SK-N-SH (cell line): ENCODE measurements at regions of chr10 and their contacts with region 1.

Region 1: DNA sequence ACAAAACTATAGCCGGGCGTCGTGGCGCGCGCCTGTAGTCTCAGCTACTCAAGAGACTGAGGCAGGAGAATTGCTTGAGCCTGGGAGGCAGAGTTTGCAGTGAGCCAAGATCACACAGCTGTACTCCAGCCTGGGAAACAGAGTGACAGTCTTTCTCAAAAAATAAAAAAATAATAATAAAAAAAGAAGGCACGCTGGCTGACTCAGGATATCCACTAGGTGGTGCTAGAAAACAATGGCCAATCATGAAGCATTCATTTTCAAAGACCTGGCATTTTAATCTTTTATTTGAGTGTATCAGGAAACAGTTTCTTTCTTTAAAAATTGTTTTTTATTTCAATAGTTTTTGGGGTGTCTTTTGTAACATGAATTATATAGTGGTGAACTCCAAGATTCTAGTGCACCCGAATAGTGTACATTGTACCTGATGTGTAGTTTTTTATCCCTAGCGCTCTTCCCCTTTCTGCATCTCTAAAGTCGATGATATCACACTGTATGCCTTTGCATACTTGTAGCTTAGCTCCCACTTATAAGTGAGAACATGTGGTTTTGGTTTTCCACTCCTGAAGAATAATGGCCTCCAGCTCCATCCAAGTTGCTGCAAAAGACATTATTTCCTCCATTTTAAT is 88.6 kb downstream of the LYZL1 start:
- DNase-seq: peak; percentile 55
- H3K4me3 ChIP-seq: no peak overlapping the region
- H3K27ac ChIP-seq: no peak overlapping the region
- H3K4me1 ChIP-seq: peaks cover 0 to 5% of the 10 kb centered on the region in 2 experiments; a peak in 2 of 4 replicates
- H3K27me3 ChIP-seq: no peaks in the 10 kb centered on the region
- CTCF ChIP-seq: peak; percentile 90
- EP300 ChIP-seq: no peak
- RAD21 ChIP-seq: peak; percentile 74

Region 2: GRCh38 chr10:29392376-29393021 is 15.1 kb after region 1 on chr10:
- CTCF ChIA-PET with region 1: interaction called, 28 read pairs
- POLR2A ChIA-PET with region 1: no interaction called
- DNase-seq: peak; percentile 75
- H3K4me3 ChIP-seq: no peak overlapping the region; a peak in 1 of 4 replicates
- H3K27ac ChIP-seq: no peak overlapping the region
- H3K4me1 ChIP-seq: no peaks in the 10 kb centered on the region; a peak in 1 of 4 replicates
- H3K27me3 ChIP-seq: peaks cover 23% of the 10 kb centered on the region; the same call in 1 of the 2 replicates
- CTCF ChIP-seq: peak; percentile 84
- EP300 ChIP-seq: no peak
- RAD21 ChIP-seq: peak; percentile 74

Region 3: DNA sequence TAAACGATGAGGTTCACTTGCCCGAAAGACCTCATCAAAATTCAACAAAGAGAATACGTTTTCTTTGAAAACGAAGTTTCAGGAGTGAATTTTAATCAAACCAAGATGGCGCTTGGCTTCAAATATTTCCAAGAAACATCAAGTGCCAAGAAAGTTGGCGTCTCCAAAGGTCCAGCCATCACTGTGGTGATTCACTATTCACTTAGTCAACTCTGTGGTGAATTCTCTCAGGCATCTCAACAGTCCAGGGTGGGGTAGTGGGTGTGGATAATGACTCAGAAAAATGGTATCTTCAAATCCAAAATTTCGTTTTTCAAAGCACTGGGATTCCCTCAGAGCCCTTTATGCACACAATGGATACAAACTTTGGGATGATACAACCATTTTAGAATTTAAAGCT is 124.2 kb after region 1 on chr10:
- CTCF ChIA-PET with region 1: interaction called, 10 read pairs
- POLR2A ChIA-PET with region 1: no interaction called
- DNase-seq: no peak
- H3K4me3 ChIP-seq: no peak overlapping the region
- H3K27ac ChIP-seq: peak overlapping the region in 1 of 2 experiments; percentile 45; a peak in 2 of 4 replicates
- H3K4me1 ChIP-seq: no peaks in the 10 kb centered on the region
- H3K27me3 ChIP-seq: no peaks in the 10 kb centered on the region
- CTCF ChIP-seq: no peak
- EP300 ChIP-seq: peak in 1 of 2 experiments; percentile 38; a peak in 2 of 4 replicates
- RAD21 ChIP-seq: no peak

Region 4: DNA sequence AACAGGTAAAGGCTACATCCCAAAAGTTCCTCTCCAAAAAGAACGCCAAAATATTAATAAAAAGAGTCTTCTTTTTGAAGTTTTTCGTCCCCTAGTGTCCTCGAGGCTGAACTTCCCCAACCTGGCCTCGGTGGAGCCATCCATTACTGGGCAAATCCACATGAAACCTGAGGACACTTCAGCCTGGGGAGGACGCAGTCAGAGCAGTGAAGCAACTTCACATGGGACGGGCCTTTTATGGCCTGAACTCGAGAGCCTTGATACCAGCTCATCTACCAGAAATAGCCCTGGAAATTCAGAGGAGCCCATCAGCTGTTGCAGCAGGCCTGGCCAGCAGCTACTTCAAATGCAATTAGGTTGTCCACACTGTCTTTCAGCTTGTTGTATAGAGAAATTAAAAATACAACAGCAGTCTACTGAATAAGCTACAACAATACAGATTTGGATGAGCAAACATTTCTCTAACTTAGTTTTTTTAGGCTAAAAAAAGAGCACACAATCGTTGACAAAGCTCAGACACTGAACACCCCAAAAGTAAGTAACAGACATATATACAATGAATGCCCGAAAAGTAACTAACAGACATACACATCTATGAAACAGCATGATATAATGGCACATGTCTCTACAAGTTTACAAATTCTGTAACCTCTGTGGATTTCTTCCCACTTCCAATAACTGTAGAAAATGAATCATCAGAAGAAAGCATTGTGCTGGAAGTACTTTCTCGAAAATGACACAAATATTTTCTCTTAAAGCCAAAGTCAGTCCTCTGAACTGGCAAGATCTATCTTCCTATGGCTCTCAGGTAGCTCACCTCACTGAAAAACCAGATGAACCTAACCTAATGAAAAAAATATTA is 257.5 kb after region 1 on chr10 and contains the start of gene SVIL:
- CTCF ChIA-PET with region 1: no interaction called
- POLR2A ChIA-PET with region 1: no interaction called
- DNase-seq: no peak
- H3K4me3 ChIP-seq: peak within 1 kb of the TSS in 1 of 2 experiments; percentile 30; a peak in 1 of 4 replicates
- H3K27ac ChIP-seq: peak within 1 kb of the TSS; percentile 56 to 93
- H3K4me1 ChIP-seq: peaks cover 6 to 43% of the 10 kb centered on the region in 2 experiments; a peak in 3 of 4 replicates
- H3K27me3 ChIP-seq: no peaks in the 10 kb centered on the region
- CTCF ChIP-seq: no peak; the same call in 1 of the 2 replicates
- EP300 ChIP-seq: no peak
- RAD21 ChIP-seq: no peak
- polyA plus RNA-seq, gene SVIL: 47.5 and 48.7 TPM in 2 replicates